ENCODE measurements at regions of chr10 and their contacts with region 1.

Region 1: DNA sequence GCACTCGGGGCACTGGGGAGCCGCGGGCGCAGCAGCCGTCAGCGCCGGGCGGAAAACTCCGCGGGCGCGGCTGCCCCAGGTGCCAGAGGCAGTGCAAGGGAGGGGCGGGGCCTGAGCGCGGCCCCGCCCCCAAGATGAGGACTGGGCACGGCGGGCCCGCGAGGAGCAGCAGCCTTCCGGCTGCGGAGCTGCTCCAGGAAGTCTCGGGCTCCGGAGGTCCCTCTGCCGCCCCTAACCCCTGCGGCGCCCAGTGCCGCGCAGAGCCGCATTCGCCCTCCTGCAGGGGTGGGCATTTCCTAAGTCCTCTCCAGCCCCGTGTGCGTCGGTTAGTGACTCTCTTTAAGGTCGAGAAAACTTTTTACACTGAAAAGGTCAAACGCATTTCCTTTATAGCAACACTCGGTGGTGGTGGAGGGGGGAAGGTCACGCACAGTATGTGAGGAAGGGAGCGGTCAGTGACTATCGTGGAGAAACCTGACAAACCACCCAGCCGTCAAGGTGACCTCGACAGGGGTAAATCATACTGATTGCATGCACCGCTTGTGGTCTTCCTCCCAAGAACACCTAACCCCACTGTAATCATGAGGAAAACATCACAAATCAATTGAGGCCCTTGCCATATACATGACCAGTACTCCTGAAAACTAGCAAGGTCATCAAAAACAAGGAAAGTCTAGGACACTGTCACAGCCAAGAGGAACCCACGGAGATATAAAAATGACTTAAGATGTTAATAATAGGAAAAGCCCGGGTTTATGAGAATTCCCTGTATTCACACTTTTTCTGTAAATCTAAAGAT is at the start of gene ANXA11:
- DNase-seq: peak; percentile 89
- H3K4me3 Mint-ChIP-seq: peak within 1 kb of the TSS; percentile 91
- H3K27ac Mint-ChIP-seq: peak within 1 kb of the TSS; percentile 91
- H3K4me1 Mint-ChIP-seq: peaks cover 42% of the 10 kb centered on the region
- H3K27me3 Mint-ChIP-seq: no peaks in the 10 kb centered on the region
- total RNA-seq, gene ANXA11: 237 to 242 TPM

Region 2: DNA sequence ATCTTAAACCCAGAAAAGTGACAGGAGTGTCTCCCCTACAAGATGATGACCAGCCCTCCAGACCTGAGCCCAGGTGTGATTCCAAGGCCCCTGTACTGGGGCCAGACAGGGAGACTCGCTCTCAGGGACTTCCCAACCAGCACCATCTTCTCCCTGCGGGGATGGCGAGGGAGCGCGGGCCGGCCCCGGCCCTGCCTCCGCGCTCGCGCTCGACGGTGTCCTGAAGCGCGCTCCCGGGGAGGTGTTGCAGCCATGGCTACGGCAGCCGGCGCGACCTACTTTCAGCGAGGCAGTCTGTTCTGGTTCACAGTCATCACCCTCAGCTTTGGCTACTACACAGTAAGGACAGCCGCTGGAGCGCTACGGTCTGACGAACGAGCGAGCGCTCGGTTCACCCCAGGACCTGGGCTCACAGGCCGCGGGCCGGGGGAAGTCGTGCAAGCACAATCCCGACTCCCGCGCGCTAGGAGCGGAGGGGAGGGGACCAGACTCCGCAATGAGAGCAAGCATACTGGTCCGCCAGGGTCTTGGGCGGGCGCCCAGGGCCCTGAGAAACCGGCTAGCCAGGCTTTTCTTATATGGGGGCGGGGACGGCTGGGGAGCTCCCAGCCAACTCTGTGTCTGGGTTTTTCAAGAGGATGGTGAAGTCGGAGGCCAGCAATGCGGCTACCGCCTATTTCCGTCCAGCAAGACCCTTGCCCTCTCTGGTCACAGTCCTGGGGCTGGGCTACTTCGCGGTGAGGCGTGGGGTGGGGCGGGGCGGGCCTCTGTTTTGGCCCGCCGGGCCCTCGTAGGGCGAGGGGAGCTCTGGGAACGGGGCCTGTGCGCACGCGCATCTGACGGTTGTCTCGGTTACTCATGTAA is 127.0 kb before region 1 on chr10 and contains the start of gene TMEM254:
- CTCF ChIA-PET with region 1: no interaction called
- POLR2A ChIA-PET with region 1: interaction called, 3 read pairs
- intact Hi-C with region 1: loop called (anchors 1 kb)
- DNase-seq: peak; percentile 94
- H3K4me3 Mint-ChIP-seq: peak within 1 kb of the TSS; percentile 97
- H3K27ac Mint-ChIP-seq: peak within 1 kb of the TSS; percentile 89
- H3K4me1 Mint-ChIP-seq: peaks cover 37% of the 10 kb centered on the region
- H3K27me3 Mint-ChIP-seq: no peaks in the 10 kb centered on the region
- total RNA-seq, gene TMEM254: 11.6 to 12.3 TPM

Region 3: GRCh38 chr10:80144067-80144695 is 61.5 kb before region 1 on chr10:
- CTCF ChIA-PET with region 1: interaction called, 32 read pairs
- POLR2A ChIA-PET with region 1: no interaction called
- intact Hi-C with region 1: loop called (anchors 10 kb)
- DNase-seq: peak; percentile 53
- H3K4me3 Mint-ChIP-seq: peak overlapping the region; percentile 62
- H3K27ac Mint-ChIP-seq: peak overlapping the region; percentile 57
- H3K4me1 Mint-ChIP-seq: peaks cover 18% of the 10 kb centered on the region
- H3K27me3 Mint-ChIP-seq: peaks cover 8% of the 10 kb centered on the region

Region 4: DNA sequence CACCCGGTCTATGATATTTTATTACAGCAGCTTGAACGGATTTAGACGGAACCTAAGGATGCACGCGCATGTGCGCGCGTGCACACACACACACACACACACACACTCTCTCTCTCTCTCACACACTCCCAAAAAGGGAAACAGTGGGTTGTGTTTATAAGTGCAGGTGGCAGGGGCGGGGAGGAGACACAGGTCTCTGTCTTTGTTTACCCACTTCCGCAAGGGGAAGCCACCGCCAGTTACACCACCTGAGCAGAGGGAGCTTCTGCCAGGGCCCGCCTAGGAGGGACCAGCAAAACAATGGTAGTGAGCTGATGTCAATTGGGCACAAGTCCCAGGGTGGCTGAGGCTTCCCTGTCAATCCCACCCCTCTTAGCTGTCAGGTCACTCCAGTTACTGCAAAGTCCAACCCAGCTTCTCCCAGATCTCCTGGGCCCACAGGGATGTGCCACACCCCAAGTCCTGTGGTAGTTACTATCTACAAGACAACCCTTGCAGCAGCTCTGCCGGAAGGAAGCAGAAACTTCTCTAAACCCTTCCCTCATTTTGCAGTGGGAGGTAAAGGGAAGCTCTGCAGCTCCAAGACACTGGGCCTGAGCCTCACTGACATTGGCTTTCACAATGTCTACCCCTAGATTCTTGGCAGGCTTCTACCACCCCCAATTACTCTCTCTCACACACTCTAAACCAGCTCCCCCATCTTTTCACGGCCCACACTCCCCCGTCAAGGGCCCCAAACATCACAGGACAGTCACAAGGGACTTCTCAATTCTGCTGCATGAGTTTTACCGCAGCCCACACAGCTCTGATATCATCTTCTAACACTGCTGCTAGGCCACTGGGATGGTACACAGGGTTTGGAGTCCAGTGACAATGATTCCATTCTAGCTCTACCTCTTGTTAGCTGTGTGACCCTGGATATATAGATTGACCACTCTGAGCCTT is 17.9 kb before region 1 on chr10:
- CTCF ChIA-PET with region 1: interaction called, 44 read pairs
- POLR2A ChIA-PET with region 1: interaction called, 52 read pairs
- intact Hi-C with region 1: loop called (anchors 1 kb)
- DNase-seq: peak; percentile 82
- H3K4me3 Mint-ChIP-seq: peak overlapping the region; percentile 54
- H3K27ac Mint-ChIP-seq: peak overlapping the region; percentile 88
- H3K4me1 Mint-ChIP-seq: peaks cover 85% of the 10 kb centered on the region
- H3K27me3 Mint-ChIP-seq: no peaks in the 10 kb centered on the region

Region 5: GRCh38 chr10:80472234-80473095 is 266.8 kb after region 1 on chr10:
- CTCF ChIA-PET with region 1: no interaction called
- POLR2A ChIA-PET with region 1: no interaction called
- intact Hi-C with region 1: loop called (anchors 5 kb)
- DNase-seq: peak; percentile 70
- H3K4me3 Mint-ChIP-seq: peak overlapping the region; percentile 27
- H3K27ac Mint-ChIP-seq: peak overlapping the region; percentile 99
- H3K4me1 Mint-ChIP-seq: peaks cover 88% of the 10 kb centered on the region
- H3K27me3 Mint-ChIP-seq: no peaks in the 10 kb centered on the region

Measured in activated CD4-positive, alpha-beta memory T cell treated with anti-CD3 and anti-CD28 coated beads for 36 hours (primary cell).